OCI-LY7 (cell line): ENCODE measurements at regions of chr16 and their contacts with region 1.

Region 1: DNA sequence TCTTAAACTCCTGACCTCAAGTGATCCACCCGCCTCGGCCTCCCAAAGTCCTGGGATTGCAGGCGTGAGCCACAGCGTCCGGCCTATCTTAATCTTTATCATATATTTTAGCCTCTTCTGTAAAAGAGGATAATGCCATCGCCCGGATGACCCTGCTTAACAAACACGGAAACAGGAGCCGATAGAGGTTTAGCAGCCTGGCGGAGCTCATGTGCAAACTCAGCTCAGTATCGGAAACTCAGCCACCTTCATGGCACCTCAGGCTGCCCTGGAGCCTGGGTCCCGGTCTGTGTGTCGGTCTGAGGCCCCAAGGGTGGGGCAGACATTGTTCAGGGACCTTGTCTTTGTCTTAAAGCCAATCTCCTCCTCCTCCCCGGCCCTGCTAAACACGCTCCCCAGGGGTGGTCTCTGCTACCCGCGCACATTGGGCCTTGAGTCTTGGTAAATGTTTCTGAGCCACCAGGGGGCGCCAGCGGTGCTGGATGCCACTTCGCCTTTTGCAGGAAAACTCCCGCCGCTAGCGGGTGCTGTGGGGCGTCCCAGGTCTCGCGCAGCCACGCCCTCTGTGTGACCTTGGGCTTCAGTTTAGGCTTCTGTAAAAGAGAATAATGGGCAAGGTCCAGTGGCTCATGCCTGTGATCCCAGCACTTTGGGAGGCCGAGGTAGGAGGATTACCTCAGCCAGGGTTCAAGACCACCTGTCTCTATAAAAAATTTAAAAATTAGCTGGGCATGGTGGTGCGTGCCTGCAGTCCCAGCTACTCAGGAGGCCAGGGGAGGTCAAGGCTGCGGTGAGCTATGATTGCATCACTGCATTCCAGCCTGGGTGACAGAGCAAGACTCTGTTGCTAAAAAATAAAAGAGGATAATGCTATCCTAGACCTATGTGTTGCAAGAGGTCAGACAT is 2.7 kb downstream of the CETP start:
- DNase-seq: peak; percentile 96
- H3K4me3 ChIP-seq: no peak overlapping the region
- H3K27ac ChIP-seq: peak overlapping the region; percentile 16
- H3K4me1 ChIP-seq: peaks cover 21% of the 10 kb centered on the region
- CTCF ChIP-seq: peak; percentile 100

Region 2: DNA sequence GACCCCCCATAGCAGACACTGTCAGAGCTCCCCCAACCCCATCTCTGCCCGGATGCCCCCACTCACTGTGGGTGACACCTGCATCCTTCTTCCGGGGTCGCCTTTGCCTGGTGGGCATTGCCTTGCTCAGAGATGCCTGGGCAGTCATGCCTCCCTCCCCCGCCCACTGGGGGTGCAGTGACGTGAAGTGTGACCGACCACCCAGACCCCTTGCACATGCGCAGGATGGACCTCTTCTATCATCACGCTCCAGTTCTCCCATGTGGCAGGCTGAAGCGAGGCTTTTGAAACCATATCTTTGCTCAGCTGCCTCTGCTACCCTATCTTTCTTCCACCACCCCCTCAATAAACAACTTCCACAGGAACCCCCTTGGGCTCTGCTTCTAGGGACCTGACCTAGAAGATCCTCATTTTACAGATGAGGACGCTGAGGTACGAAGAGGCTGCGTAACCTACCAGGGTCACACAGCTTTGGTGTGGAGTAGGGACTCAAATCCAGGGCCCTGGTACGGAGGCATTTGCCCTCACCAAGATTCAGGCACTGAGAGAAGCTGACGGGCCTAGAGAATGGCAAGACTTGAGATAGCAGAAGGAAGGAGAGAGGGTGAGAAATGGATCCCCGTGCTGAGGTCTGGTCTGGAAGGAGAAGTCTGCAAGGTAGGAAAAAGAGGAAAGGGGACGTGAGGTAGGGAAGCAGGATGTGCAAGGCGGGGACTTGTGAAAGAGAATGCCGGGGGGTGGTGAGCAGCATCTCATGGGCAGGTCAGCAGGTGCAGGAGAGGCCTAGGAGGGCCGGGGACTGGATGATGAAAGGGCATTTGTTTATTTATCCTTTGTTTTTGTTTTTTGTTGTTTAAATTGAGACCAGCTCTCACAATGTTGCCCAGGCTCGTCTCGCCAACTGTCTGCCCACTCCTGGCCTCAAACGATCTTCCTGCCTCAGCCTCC is 39.2 kb after region 1 on chr16:
- CTCF ChIA-PET with region 1: no interaction called
- POLR2A ChIA-PET with region 1: no interaction called
- intact Hi-C with region 1: no loop called
- DNase-seq: peak; percentile 76
- H3K4me3 ChIP-seq: peak overlapping the region; percentile 43
- H3K27ac ChIP-seq: peak overlapping the region; percentile 74
- H3K4me1 ChIP-seq: peaks cover 76% of the 10 kb centered on the region
- CTCF ChIP-seq: no peak

Region 3: DNA sequence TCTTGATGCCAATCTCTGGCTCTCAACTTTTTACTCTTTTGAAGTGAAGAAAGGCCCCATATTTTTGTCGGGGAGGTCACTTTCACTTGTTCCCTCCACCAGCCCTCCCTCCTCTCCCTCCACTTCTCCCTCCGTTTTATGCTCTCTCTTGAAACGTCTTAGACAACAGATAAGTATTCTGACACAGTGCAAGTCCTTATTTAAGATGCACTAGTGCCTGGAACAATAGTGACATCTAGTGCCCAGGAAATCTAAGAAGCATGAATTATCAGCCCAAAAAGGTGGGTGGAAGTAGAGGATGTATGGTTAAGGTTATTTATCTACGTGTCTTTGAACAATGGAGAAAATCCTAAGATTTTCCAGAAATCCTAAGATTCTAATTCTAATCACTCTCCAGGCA is 203.5 kb after region 1 on chr16:
- CTCF ChIA-PET with region 1: no interaction called
- POLR2A ChIA-PET with region 1: no interaction called
- intact Hi-C with region 1: loop called (anchors 1 kb)
- DNase-seq: peak; percentile 84
- H3K4me3 ChIP-seq: no peak overlapping the region
- H3K27ac ChIP-seq: no peak overlapping the region
- H3K4me1 ChIP-seq: peaks cover 10% of the 10 kb centered on the region
- CTCF ChIP-seq: peak; percentile 96